ENCODE measurements at regions of chr2 and their contacts with region 1.

Region 1: GRCh38 chr2:190853531-190854383 is 26.9 kb upstream of the GLS start:
- DNase-seq: no peak
- ATAC-seq: no peak
- H3K4me3 ChIP-seq: no peak overlapping the region
- H3K27ac ChIP-seq: peak overlapping the region in 1 of 12 donors; percentile 12
- H3K4me1 ChIP-seq: peaks cover 0 to 14% (median under 1%) of the 10 kb centered on the region in 12 donors
- H3K27me3 ChIP-seq: no peaks in the 10 kb centered on the region
- CTCF ChIP-seq: no peak
- POLR2A ChIP-seq: no peak

Region 2: GRCh38 chr2:190781604-190782198 is 72.1 kb before region 1 on chr2:
- intact Hi-C with region 1: loop called in 1 of 10 experiments (anchors 5 kb)
- DNase-seq: peak in 3 of 5 donors; percentile 42 to 46 (median 42)
- ATAC-seq: peak in 3 of 4 donors; percentile 52 to 69 (median 69)
- H3K4me3 ChIP-seq: no peak overlapping the region
- H3K27ac ChIP-seq: no peak overlapping the region
- H3K4me1 ChIP-seq: peaks cover 0 to 3% (median 0%) of the 10 kb centered on the region in 12 donors
- H3K27me3 ChIP-seq: no peaks in the 10 kb centered on the region
- CTCF ChIP-seq: peak; percentile 41 to 78 (median 66)
- POLR2A ChIP-seq: no peak

Region 3: DNA sequence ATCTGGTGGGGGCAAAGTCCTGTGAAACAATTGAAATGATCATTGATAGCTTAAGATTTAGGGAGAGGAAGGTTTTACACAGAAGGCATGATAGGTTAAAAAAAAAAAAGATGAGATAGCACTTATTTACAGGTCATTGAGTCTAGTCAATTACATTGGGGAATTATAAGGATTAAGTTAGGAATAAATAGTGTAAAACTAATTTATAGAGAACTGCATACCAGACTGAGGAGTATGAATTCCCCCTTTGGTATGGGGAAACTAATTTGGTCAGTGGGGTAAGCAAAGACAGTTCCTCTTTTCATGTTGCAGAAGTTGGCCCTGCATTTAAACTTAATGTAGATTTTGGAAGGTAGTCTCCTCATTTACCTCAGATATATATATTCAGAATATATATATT is 37.6 kb after region 1 on chr2:
- intact Hi-C with region 1: loop called in 1 of 10 experiments (anchors 5 kb)
- DNase-seq: no peak
- ATAC-seq: peak in 1 of 4 donors; percentile 38
- H3K4me3 ChIP-seq: no peak overlapping the region
- H3K27ac ChIP-seq: peak overlapping the region in 1 of 12 donors; percentile 59
- H3K4me1 ChIP-seq: peaks cover 0 to 68% (median 49%) of the 10 kb centered on the region in 12 donors
- H3K27me3 ChIP-seq: no peaks in the 10 kb centered on the region
- CTCF ChIP-seq: no peak
- POLR2A ChIP-seq: no peak

Region 4: DNA sequence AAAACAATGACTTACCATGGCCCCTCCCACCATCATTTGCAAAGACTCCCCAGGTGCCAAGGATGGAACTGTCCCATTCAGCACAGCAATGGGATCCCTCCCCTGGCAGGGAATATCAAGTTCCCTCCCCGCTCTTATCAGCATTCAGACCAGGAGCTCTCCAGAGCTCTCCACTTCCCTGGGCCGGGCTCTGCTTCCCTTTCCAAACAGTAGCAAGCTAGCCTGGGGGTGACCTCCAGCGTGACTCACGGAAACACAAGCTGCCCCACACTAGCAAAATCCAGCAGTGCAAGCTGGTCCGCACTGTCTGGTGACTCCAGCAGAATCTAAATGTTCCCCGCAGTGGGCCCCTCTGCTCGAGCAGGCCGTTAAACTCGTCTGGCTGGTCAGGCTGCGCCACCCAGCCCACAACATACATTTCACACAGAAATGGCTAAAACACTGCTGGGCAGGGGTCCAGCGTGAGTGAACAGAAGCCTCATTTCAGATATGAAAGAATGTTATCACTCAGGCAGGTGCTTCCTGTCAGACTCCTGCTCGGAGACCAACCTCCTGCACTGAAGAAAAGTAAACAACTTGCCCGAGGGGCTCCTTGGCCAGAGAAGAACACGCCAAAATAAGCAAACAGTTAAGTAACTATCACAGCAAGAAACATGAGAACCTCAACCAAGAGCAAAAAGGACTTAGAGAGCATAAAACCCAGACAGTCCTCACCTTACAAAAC is 126.3 kb after region 1 on chr2:
- intact Hi-C with region 1: loop called in 1 of 10 experiments (anchors 10 kb)
- DNase-seq: peak; percentile 76 to 90 (median 84)
- ATAC-seq: peak; percentile 94 to 96 (median 96)
- H3K4me3 ChIP-seq: peak overlapping the region in 7 of 12 donors; percentile 2 to 24 (median 11)
- H3K27ac ChIP-seq: peak overlapping the region; percentile 53 to 85 (median 73)
- H3K4me1 ChIP-seq: peaks cover 4 to 76% (median 22%) of the 10 kb centered on the region in 12 donors
- H3K27me3 ChIP-seq: no peaks in the 10 kb centered on the region
- CTCF ChIP-seq: peak in 1 of 12 donors; percentile 8
- POLR2A ChIP-seq: no peak

Region 5: GRCh38 chr2:191020221-191020741 is 166.5 kb after region 1 on chr2:
- intact Hi-C with region 1: loop called in 3 of 10 experiments (anchors 5 to 10 kb)
- DNase-seq: peak; percentile 94 to 96 (median 94)
- ATAC-seq: peak; percentile 98 to 99 (median 99)
- H3K4me3 ChIP-seq: peak overlapping the region; percentile 42 to 88 (median 71)
- H3K27ac ChIP-seq: peak overlapping the region; percentile 46 to 100 (median 84)
- H3K4me1 ChIP-seq: peaks cover 0 to 69% (median 8%) of the 10 kb centered on the region in 12 donors
- H3K27me3 ChIP-seq: no peaks in the 10 kb centered on the region
- CTCF ChIP-seq: peak in 5 of 12 donors; percentile 14 to 37 (median 22)
- POLR2A ChIP-seq: peak in 1 of 2 donors; percentile 88

Region 6: GRCh38 chr2:191030521-191031154 is 176.9 kb after region 1 on chr2:
- intact Hi-C with region 1: loop called in 5 of 10 experiments (anchors 2 to 10 kb)
- DNase-seq: no peak
- ATAC-seq: peak in 3 of 4 donors; percentile 54 to 71 (median 66)
- H3K4me3 ChIP-seq: no peak overlapping the region
- H3K27ac ChIP-seq: no peak overlapping the region
- H3K4me1 ChIP-seq: peaks cover 0 to 60% (median 1%) of the 10 kb centered on the region in 12 donors
- H3K27me3 ChIP-seq: no peaks in the 10 kb centered on the region
- CTCF ChIP-seq: peak; percentile 48 to 70 (median 62)
- POLR2A ChIP-seq: no peak